MCF 10A (cell line): ENCODE measurements at regions of chr1 and their contacts with region 1.

Region 1: GRCh38 chr1:160006312-160006940 is 25.4 kb downstream of the PIGM start:
- DNase-seq: peak; percentile 87
- H3K4me3 Mint-ChIP-seq: no peak overlapping the region
- H3K27ac Mint-ChIP-seq: no peak overlapping the region
- H3K4me1 Mint-ChIP-seq: peaks cover 11% of the 10 kb centered on the region
- H3K27me3 Mint-ChIP-seq: no peaks in the 10 kb centered on the region
- CTCF ChIP-seq: peak; percentile 99

Region 2: DNA sequence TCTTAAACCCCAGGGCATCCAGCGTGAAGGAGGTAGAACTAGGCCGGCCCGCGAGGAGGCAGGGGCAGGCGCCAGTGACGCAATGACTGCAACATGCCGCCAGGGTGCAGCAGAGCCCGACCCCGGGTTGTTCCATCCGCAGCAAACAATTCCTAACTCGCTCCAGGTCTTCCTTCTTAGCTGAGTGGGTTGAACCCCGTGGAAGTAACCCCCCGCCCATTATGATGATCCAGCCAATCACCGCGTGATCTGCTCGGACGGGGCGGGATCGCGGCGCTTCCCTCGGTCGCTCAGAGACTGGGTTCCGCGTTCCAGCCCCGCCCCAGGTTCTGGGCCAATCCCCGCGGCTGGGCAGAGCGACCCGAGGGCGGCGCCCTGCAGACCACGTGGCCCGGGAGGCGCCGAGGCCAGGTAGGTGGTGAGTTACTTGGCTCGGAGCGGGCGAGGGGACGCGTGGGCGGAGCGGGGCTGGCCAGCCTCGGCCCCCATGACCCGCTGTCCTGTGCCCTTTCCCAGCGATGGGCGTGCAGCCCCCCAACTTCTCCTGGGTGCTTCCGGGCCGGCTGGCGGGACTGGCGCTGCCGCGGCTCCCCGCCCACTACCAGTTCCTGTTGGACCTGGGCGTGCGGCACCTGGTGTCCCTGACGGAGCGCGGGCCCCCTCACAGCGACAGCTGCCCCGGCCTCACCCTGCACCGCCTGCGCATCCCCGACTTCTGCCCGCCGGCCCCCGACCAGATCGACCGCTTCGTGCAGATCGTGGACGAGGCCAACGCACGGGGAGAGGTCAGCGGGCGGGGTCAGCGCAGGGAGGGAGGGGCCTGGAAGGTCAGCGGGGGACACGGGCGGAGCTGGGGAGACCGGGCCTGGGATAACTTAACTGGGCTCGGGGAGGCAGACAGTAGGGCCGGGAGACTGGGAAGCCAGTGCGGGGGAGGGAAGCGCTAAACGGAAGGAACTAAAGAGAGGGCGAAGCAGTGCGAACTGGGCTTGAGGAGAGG is 225.5 kb before region 1 on chr1 and contains the start of gene DUSP23:
- CTCF ChIA-PET with region 1: interaction called, 13 read pairs
- POLR2A ChIA-PET with region 1: no interaction called
- intact Hi-C with region 1: loop called (anchors 1 kb)
- DNase-seq: peak; percentile 100
- H3K4me3 Mint-ChIP-seq: peak within 1 kb of the TSS; percentile 87
- H3K27ac Mint-ChIP-seq: peak within 1 kb of the TSS; percentile 71
- H3K4me1 Mint-ChIP-seq: peaks cover 65% of the 10 kb centered on the region
- H3K27me3 Mint-ChIP-seq: no peaks in the 10 kb centered on the region
- CTCF ChIP-seq: peak; percentile 97
- total RNA-seq, gene DUSP23: 119 and 178 TPM in 2 replicates

Region 3: DNA sequence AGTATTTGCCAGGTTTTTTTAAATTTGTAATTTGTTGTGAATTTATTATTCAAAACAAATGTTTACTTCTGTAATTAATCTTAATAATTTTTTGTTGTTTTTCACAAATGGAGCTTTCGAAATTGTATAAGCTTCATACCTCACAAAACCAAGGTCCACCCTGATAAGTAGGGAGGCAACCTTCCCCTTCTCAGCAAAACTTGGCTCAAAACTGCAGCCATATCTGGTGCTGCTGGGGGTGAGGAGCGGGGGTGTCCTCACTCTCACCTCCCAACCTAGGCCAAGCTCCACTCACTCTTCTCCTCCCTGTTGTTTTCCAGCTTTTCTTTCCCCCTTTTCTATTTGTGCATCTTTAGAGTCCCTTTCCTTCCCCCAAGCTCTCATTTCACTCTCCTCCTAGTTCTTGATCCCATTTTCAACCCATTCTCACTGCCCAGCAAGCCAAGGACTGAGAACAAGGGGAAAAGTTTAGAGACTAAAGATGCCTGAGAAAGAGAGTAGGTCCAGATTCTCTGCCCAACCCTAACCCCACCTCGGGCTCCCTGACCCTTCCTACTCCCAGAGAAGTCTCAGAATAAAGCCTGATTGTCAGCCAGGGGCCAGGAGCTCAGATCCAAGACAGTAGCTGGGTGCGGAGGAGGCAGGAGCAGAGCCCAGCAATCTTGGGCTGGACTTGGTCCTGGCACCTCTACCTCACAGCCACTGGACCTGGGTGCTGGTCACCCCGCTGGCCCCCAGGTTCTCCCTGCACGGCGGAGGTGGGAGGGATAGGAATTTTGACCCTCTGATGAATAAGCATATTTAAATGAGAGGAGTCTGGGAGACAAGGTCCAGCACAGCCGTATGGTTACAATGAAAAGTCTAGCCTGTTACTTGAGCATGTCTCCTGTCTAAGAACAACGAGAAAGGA is 98.1 kb before region 1 on chr1:
- CTCF ChIA-PET with region 1: interaction called, 24 read pairs
- POLR2A ChIA-PET with region 1: no interaction called
- intact Hi-C with region 1: no loop called
- DNase-seq: no peak
- H3K4me3 Mint-ChIP-seq: no peak overlapping the region
- H3K27ac Mint-ChIP-seq: no peak overlapping the region
- H3K4me1 Mint-ChIP-seq: peaks cover 16% of the 10 kb centered on the region
- H3K27me3 Mint-ChIP-seq: no peaks in the 10 kb centered on the region
- CTCF ChIP-seq: no peak

Region 4: DNA sequence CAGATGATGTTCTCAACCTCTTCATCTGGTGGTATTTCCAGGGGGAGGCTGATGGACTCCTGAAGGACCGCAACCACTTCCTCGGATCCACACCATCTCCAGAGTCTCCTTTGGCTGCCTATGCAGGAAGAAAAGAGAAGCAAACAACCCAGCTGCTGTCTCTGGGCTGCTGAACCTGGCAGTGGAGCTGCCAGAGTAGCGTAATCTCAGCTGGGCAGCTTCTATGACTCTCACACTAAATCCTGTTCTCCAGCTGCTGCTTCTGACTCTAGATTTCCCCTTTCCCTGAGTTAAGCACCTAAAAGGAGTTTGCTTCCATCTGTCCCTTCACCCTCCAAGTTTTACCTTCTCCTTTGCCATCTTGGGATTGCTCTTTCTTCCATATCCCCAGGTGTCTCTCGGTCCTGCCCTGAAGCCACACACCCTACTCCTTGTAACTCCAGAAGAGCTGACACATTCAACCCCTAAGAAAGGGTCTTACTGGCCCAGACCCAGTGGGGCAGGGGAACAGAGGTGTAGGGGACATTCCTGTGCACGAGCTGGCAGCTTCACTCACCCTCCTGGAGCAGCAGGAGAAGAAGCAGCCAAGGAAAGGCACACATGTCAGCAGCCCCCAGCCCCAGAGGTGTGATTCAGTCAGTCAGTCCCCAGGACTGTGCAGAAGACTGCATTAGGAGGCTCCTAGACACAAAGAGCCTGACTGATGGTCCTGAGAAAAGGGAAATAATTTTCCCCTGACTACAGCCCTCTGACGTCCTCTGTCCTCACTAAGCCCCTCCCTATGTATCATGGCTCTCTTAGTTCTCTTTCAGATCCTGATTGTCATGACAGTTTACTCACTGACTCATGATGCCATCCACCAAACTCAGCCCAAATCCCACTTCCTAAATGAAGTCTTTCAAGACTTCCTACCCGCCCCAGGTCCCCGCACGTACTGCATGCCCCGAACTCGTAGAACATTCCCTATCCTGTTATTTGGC is 52.6 kb before region 1 on chr1 and contains the start of gene SLAMF9:
- CTCF ChIA-PET with region 1: interaction called, 1,675 read pairs
- POLR2A ChIA-PET with region 1: interaction called, 13 read pairs
- intact Hi-C with region 1: no loop called
- DNase-seq: peak; percentile 23
- H3K4me3 Mint-ChIP-seq: no peak within 1 kb of the TSS
- H3K27ac Mint-ChIP-seq: no peak within 1 kb of the TSS
- H3K4me1 Mint-ChIP-seq: peaks cover 25% of the 10 kb centered on the region
- H3K27me3 Mint-ChIP-seq: no peaks in the 10 kb centered on the region
- CTCF ChIP-seq: no peak
- total RNA-seq, gene SLAMF9: not detected in 2 replicates

Region 5: GRCh38 chr1:159979257-159979656 is 27.2 kb before region 1 on chr1:
- CTCF ChIA-PET with region 1: interaction called, 75 read pairs
- POLR2A ChIA-PET with region 1: interaction called, 3 read pairs
- intact Hi-C with region 1: no loop called
- DNase-seq: no peak
- H3K4me3 Mint-ChIP-seq: no peak overlapping the region
- H3K27ac Mint-ChIP-seq: no peak overlapping the region
- H3K4me1 Mint-ChIP-seq: peaks cover 9% of the 10 kb centered on the region
- H3K27me3 Mint-ChIP-seq: no peaks in the 10 kb centered on the region
- CTCF ChIP-seq: no peak

Region 6: GRCh38 chr1:160031365-160032164 is 25.1 kb after region 1 on chr1 and contains the start of gene PIGM:
- CTCF ChIA-PET with region 1: interaction called, 248 read pairs
- POLR2A ChIA-PET with region 1: interaction called, 27 read pairs
- intact Hi-C with region 1: no loop called
- DNase-seq: peak; percentile 99
- H3K4me3 Mint-ChIP-seq: peak within 1 kb of the TSS; percentile 80
- H3K27ac Mint-ChIP-seq: peak within 1 kb of the TSS; percentile 60
- H3K4me1 Mint-ChIP-seq: peaks cover 24% of the 10 kb centered on the region
- H3K27me3 Mint-ChIP-seq: no peaks in the 10 kb centered on the region
- CTCF ChIP-seq: no peak
- total RNA-seq, gene PIGM: 7.7 and 10.1 TPM in 2 replicates